Endothelial cell of umbilical vein (primary cell): ENCODE measurements at regions of chr13 and their contacts with region 1.

Region 1: DNA sequence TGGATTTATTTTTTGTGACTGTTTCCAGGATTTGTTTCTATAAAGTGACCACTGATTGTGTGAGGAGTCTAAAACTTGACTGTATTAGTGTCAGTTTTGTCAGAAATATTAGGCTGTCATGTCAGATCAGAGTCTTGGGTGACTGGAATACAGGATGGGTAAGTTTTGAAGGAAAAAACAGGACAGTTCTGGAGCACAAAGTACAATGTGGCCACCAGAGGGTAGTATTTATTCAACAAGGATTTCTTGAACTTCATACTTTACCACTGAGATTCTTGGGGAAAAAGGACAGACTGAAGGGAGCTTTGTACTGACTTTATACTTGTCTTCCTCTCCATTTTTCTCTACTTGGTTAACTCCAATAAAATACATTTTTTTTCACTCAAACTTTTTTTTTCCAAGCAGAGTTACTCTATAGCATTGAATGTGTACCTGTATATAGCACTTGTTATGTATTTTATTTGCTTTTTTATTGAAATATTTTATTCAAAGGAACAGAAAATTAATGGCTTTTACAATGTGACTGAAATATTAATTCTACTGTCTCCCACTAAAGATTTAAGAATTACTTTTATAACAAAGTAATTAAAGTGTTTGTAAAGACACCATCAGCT is 51.1 kb downstream of the LMO7 start:
- DNase-seq: peak; percentile 41
- H3K4me3 ChIP-seq: no peak overlapping the region
- H3K27ac ChIP-seq: no peak overlapping the region
- H3K4me1 ChIP-seq: no peaks in the 10 kb centered on the region
- H3K27me3 ChIP-seq: no peaks in the 10 kb centered on the region
- CTCF ChIP-seq: peak; percentile 35 to 50
- POLR2A ChIP-seq: no peak

Region 2: GRCh38 chr13:75537401-75538365 is 149.6 kb before region 1 on chr13 and contains the start of gene COMMD6:
- CTCF ChIA-PET with region 1: no interaction called
- POLR2A ChIA-PET with region 1: no interaction called
- dilution Hi-C with region 1: no loop called
- intact Hi-C with region 1: no loop called
- DNase-seq: peak; percentile 83
- H3K4me3 ChIP-seq: peak within 1 kb of the TSS; percentile 56 to 81 (median 64)
- H3K27ac ChIP-seq: peak within 1 kb of the TSS; percentile 79
- H3K4me1 ChIP-seq: peaks cover 8% of the 10 kb centered on the region
- H3K27me3 ChIP-seq: no peaks in the 10 kb centered on the region
- CTCF ChIP-seq: no peak
- POLR2A ChIP-seq: peak; percentile 97
- total RNA-seq, gene COMMD6: 112 and 122 TPM in 2 replicates

Region 3: DNA sequence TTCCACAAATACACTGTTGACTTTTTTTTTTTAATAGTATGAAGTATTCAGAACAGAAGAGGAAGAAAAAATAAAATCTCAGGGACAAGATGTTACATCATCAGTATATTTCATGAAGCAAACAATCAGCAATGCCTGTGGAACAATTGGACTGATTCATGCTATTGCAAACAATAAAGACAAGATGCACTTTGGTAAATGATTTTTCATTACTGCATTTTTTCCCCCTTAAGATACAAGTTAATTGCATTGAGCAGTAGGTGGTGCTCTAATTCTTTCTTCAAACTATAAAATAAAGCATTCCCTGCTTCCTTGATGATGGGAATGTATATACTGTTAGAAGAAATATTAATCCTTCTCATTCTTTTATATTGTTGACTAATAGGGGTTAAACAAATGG is 120.6 kb before region 1 on chr13:
- CTCF ChIA-PET with region 1: no interaction called
- POLR2A ChIA-PET with region 1: no interaction called
- dilution Hi-C with region 1: no loop called
- intact Hi-C with region 1: loop called (anchors 2 kb)
- DNase-seq: peak; percentile 46
- H3K4me3 ChIP-seq: no peak overlapping the region
- H3K27ac ChIP-seq: no peak overlapping the region
- H3K4me1 ChIP-seq: no peaks in the 10 kb centered on the region
- H3K27me3 ChIP-seq: no peaks in the 10 kb centered on the region
- CTCF ChIP-seq: peak in 1 of 2 donors; percentile 22
- POLR2A ChIP-seq: no peak

Region 4: DNA sequence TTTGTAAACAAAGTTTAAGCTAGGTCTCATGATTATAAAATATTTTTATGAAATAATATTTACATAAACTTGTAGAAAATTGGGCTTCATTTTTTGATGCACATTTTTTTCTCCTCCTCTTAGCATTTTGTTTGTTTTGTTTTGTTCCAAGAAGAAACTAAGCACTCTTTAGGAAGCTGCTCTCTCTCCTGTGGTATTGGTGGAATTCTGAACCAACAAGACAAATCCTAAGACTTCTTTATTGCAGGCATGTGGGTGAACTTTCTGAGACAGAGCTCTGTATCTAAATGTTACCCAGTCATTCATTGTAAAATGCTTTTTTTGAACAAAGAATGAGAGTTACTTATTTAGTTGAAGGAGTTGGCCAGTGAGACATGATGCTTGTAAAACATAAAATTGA is 11.8 kb before region 1 on chr13:
- CTCF ChIA-PET with region 1: interaction called, 39 read pairs
- POLR2A ChIA-PET with region 1: no interaction called
- dilution Hi-C with region 1: no loop called
- intact Hi-C with region 1: no loop called
- DNase-seq: no peak
- H3K4me3 ChIP-seq: no peak overlapping the region
- H3K27ac ChIP-seq: no peak overlapping the region
- H3K4me1 ChIP-seq: peaks cover 1% of the 10 kb centered on the region
- H3K27me3 ChIP-seq: no peaks in the 10 kb centered on the region
- CTCF ChIP-seq: no peak
- POLR2A ChIP-seq: no peak

Region 5: DNA sequence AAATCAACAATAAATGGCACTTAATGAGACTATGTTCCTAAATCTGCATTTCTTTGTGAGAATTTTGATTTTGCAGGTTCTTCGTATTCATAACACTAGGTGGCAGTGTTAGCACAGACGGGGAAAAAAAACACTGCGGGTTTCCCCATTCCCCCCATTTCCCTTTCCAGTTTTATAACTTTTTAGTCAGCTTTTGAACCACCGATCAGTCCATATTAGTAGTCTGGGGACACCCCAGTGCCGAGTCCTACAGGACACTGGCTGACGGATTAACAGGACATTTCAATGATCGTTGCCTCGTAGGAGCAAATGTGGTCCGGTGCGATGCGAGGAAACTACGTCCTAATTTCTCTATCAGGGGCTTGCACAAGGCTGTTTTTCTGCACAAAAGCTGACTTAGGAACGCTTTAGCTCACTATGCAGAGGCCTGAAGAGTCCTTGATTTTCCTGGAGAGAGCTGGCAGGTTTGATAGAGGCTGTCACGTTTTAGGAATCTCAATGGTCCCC is 183.2 kb after region 1 on chr13:
- CTCF ChIA-PET with region 1: interaction called, 14 read pairs
- POLR2A ChIA-PET with region 1: no interaction called
- dilution Hi-C with region 1: no loop called
- intact Hi-C with region 1: no loop called
- DNase-seq: peak; percentile 36
- H3K4me3 ChIP-seq: peak overlapping the region; percentile 28 to 74 (median 37)
- H3K27ac ChIP-seq: no peak overlapping the region
- H3K4me1 ChIP-seq: peaks cover 4% of the 10 kb centered on the region
- H3K27me3 ChIP-seq: peaks cover 0 to 2% of the 10 kb centered on the region in 2 experiments
- CTCF ChIP-seq: peak; percentile 58 to 59
- POLR2A ChIP-seq: no peak

Region 6: GRCh38 chr13:76016799-76017400 is 329.6 kb after region 1 on chr13:
- CTCF ChIA-PET with region 1: interaction called, 25 read pairs
- POLR2A ChIA-PET with region 1: no interaction called
- dilution Hi-C with region 1: no loop called
- intact Hi-C with region 1: no loop called
- DNase-seq: peak; percentile 52
- H3K4me3 ChIP-seq: no peak overlapping the region
- H3K27ac ChIP-seq: no peak overlapping the region
- H3K4me1 ChIP-seq: no peaks in the 10 kb centered on the region
- H3K27me3 ChIP-seq: peaks cover 0 to 2% of the 10 kb centered on the region in 2 experiments
- CTCF ChIP-seq: peak; percentile 44 to 53
- POLR2A ChIP-seq: no peak